ENCODE measurements at regions of chr18 and their contacts with region 1.

Region 1: DNA sequence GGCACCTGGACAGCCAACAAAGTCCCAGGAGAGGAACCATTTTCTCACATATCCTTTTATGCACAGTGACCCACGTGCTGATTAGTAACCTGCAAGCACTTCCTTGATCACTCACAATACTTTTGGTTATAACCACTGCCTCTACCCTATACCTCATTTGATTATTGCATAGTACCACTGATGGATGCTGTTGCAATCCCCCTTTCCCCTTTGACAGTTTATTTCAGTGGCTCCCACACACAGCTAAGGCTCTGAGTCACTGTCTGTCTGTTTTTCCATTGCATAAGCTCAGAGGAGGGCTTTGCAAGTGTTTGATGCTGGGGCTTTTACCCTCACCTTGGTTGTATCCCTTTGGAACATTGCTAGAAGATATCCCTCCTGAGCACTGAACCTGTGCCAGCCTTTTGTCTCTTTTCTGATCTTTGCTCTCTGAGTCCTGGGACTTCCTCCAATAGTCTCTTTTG is 101.7 kb upstream of the RBBP8 start:
- DNase-seq: no peak
- ATAC-seq: no peak
- H3K4me3 ChIP-seq: no peak overlapping the region
- H3K4me3 Mint-ChIP-seq: no peak overlapping the region
- H3K27ac ChIP-seq: no peak overlapping the region
- H3K27ac Mint-ChIP-seq: no peak overlapping the region
- H3K4me1 ChIP-seq: no peaks in the 10 kb centered on the region
- H3K4me1 Mint-ChIP-seq: no peaks in the 10 kb centered on the region
- H3K27me3 ChIP-seq: no peaks in the 10 kb centered on the region
- H3K27me3 Mint-ChIP-seq: peaks cover 20% of the 10 kb centered on the region
- CTCF ChIP-seq: no peak

Region 2: GRCh38 chr18:22267697-22268096 is 563.8 kb before region 1 on chr18:
- CTCF ChIA-PET with region 1: no interaction called
- POLR2A ChIA-PET with region 1: no interaction called
- intact Hi-C with region 1: no loop called
- DNase-seq: no peak
- ATAC-seq: no peak
- H3K4me3 ChIP-seq: no peak overlapping the region
- H3K4me3 Mint-ChIP-seq: no peak overlapping the region
- H3K27ac ChIP-seq: no peak overlapping the region
- H3K27ac Mint-ChIP-seq: no peak overlapping the region
- H3K4me1 ChIP-seq: no peaks in the 10 kb centered on the region
- H3K4me1 Mint-ChIP-seq: peaks cover 5% of the 10 kb centered on the region
- H3K27me3 ChIP-seq: no peaks in the 10 kb centered on the region
- H3K27me3 Mint-ChIP-seq: peaks cover 4% of the 10 kb centered on the region
- CTCF ChIP-seq: no peak

Region 3: DNA sequence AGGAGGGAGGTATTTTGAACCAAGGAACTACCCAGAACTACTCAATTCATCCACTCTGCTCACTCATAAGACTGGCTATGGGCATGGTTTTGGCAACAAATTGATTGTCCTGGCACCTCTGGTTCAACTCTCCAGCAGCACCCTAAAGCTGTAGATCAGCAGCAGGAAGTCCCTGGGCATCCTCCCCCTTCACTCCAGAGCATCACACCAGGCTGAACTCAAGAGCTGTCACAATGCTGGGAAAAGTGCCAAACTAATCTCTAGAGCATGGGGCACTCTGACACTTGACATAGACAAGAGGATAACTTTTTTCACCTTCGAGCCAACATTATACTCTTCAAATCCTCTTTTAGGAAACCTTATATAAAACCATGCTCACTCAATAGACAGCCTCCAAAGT is 52.5 kb before region 1 on chr18:
- CTCF ChIA-PET with region 1: no interaction called
- POLR2A ChIA-PET with region 1: no interaction called
- intact Hi-C with region 1: loop called in 1 of 2 experiments (anchors 10 kb)
- DNase-seq: no peak
- ATAC-seq: no peak
- H3K4me3 ChIP-seq: no peak overlapping the region
- H3K4me3 Mint-ChIP-seq: no peak overlapping the region
- H3K27ac ChIP-seq: no peak overlapping the region
- H3K27ac Mint-ChIP-seq: no peak overlapping the region
- H3K4me1 ChIP-seq: no peaks in the 10 kb centered on the region
- H3K4me1 Mint-ChIP-seq: no peaks in the 10 kb centered on the region
- H3K27me3 ChIP-seq: no peaks in the 10 kb centered on the region
- H3K27me3 Mint-ChIP-seq: peaks cover 5% of the 10 kb centered on the region
- CTCF ChIP-seq: no peak

Region 4: DNA sequence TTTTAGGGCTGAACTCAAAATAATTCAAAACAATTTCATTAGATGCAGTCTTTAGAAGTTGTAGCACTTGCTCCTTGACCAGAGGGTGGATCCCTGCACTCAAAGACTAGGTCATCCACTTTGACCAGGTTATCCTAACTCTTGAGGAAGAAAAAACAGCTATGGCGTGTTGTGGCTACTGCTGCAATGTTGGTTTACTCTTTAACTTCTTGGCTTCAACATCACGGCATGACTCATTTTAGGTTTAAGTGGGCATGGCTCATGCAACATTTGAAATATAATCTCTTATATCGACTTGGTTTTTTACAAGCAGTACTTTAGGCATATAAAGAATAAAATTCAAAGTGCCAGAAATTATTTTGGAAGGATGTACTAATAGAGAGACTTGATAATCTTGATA is 795.8 kb after region 1 on chr18:
- CTCF ChIA-PET with region 1: no interaction called
- POLR2A ChIA-PET with region 1: no interaction called
- intact Hi-C with region 1: loop called in 1 of 2 experiments (anchors 5 kb)
- DNase-seq: no peak
- ATAC-seq: no peak
- H3K4me3 ChIP-seq: no peak overlapping the region
- H3K4me3 Mint-ChIP-seq: no peak overlapping the region
- H3K27ac ChIP-seq: no peak overlapping the region
- H3K27ac Mint-ChIP-seq: no peak overlapping the region
- H3K4me1 ChIP-seq: no peaks in the 10 kb centered on the region
- H3K4me1 Mint-ChIP-seq: no peaks in the 10 kb centered on the region
- H3K27me3 ChIP-seq: no peaks in the 10 kb centered on the region
- H3K27me3 Mint-ChIP-seq: peaks cover 2% of the 10 kb centered on the region
- CTCF ChIP-seq: no peak